B cell (primary cell): ENCODE measurements at regions of chr3 and their contacts with region 1.

Region 1: GRCh38 chr3:46222435-46223161 is 14.5 kb upstream of the CCR1 start:
- DNase-seq: peak; percentile 66
- ATAC-seq: peak; percentile 72
- H3K4me3 ChIP-seq: no peak overlapping the region
- H3K4me3 Mint-ChIP-seq: peak overlapping the region; percentile 60
- H3K27ac ChIP-seq: peak overlapping the region; percentile 44 to 50
- H3K27ac Mint-ChIP-seq: peak overlapping the region; percentile 74
- H3K4me1 ChIP-seq: peaks cover 35 to 41% of the 10 kb centered on the region in 2 donors
- H3K4me1 Mint-ChIP-seq: peaks cover 49% of the 10 kb centered on the region
- H3K27me3 ChIP-seq: no peaks in the 10 kb centered on the region
- H3K27me3 Mint-ChIP-seq: no peaks in the 10 kb centered on the region
- CTCF ChIP-seq: no peak

Region 2: DNA sequence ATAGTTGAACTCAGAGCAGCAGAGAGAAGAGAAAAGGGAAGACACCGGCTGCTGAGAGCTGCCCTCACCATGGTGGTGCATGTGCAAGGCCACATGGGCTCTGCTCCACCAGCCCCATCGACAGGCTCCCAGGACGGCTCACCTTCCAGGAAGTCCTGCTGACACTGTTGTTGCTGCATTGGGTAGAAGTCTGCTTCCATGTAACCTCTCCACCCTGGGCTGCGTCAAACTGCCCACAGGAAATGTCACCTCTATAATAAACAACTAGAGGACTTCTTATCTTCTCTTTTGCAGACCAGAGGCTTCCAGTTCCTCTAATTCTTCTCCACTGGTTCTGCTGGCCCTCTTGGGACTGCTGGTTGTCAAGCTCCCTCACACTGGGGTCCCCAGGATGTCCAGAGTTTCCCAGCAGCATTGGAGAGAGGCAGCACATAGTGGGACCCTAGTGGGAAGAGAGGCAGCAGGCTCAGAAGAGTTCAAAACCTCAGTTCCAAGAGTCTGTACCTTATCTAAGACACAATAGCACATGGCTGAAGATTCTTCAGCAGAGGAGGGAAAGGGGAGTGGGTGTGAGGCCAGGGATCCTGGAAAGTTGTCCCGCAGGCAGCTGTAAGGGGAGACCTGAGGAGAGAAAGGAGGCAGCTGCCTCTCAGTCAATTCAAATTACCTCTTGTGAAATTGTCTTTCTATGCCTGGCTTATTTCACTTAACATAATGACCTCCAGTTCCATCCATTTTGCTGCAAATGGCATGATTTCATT is 13.9 kb after region 1 on chr3:
- CTCF ChIA-PET with region 1: no interaction called
- POLR2A ChIA-PET with region 1: no interaction called
- intact Hi-C with region 1: loop called (anchors 2 kb)
- DNase-seq: no peak
- ATAC-seq: no peak
- H3K4me3 ChIP-seq: no peak overlapping the region
- H3K4me3 Mint-ChIP-seq: no peak overlapping the region
- H3K27ac ChIP-seq: no peak overlapping the region
- H3K27ac Mint-ChIP-seq: no peak overlapping the region
- H3K4me1 ChIP-seq: peaks cover 0 to under 1% of the 10 kb centered on the region in 2 donors
- H3K4me1 Mint-ChIP-seq: peaks cover 10% of the 10 kb centered on the region
- H3K27me3 ChIP-seq: peaks cover 0 to 2% (median 0%) of the 10 kb centered on the region in 4 experiments
- H3K27me3 Mint-ChIP-seq: peaks cover 6% of the 10 kb centered on the region
- CTCF ChIP-seq: no peak

Region 3: DNA sequence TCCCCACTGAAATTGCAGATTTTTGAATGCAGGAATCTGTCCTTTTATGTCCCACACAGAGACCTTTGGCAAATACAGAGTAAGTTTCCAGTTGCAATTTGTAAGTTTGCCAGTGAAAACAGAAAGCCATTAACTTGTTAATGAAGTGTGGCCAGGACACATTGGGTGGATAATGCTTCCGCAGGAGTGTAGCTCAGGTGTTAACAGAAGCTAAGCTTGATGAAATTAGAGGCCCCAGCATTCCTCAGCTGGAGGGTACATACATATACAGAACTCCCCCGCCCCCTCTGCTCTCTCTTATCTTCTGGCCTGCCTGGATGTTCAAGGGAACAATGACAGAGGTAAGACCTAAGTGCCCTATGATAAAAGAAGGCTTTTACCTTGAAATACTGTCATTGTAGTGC is 351.6 kb after region 1 on chr3:
- CTCF ChIA-PET with region 1: no interaction called
- POLR2A ChIA-PET with region 1: no interaction called
- intact Hi-C with region 1: no loop called
- DNase-seq: no peak
- ATAC-seq: no peak
- H3K4me3 ChIP-seq: no peak overlapping the region
- H3K4me3 Mint-ChIP-seq: no peak overlapping the region
- H3K27ac ChIP-seq: no peak overlapping the region
- H3K27ac Mint-ChIP-seq: no peak overlapping the region
- H3K4me1 ChIP-seq: peaks cover 0 to 4% of the 10 kb centered on the region in 2 donors
- H3K4me1 Mint-ChIP-seq: no peaks in the 10 kb centered on the region
- H3K27me3 ChIP-seq: peaks cover 0 to 7% (median 3%) of the 10 kb centered on the region in 4 experiments
- H3K27me3 Mint-ChIP-seq: peaks cover 27% of the 10 kb centered on the region
- CTCF ChIP-seq: no peak